CD8-positive, alpha-beta memory T cell (primary cell): ENCODE measurements at regions of chr11 and their contacts with region 1.

Region 1: GRCh38 chr11:72144807-72145560 is 9.5 kb downstream of the FOLR3 start:
- DNase-seq: no peak
- H3K4me3 ChIP-seq: no peak overlapping the region
- H3K4me3 Mint-ChIP-seq: no peak overlapping the region
- H3K27ac ChIP-seq: no peak overlapping the region
- H3K27ac Mint-ChIP-seq: peak overlapping the region in 1 of 8 donors; percentile 36
- H3K4me1 ChIP-seq: no peaks in the 10 kb centered on the region
- H3K4me1 Mint-ChIP-seq: peaks cover 0 to 11% (median 2%) of the 10 kb centered on the region in 3 donors
- H3K27me3 ChIP-seq: no peaks in the 10 kb centered on the region
- H3K27me3 Mint-ChIP-seq: peaks cover under 1 to 6% of the 10 kb centered on the region in 2 donors

Region 2: DNA sequence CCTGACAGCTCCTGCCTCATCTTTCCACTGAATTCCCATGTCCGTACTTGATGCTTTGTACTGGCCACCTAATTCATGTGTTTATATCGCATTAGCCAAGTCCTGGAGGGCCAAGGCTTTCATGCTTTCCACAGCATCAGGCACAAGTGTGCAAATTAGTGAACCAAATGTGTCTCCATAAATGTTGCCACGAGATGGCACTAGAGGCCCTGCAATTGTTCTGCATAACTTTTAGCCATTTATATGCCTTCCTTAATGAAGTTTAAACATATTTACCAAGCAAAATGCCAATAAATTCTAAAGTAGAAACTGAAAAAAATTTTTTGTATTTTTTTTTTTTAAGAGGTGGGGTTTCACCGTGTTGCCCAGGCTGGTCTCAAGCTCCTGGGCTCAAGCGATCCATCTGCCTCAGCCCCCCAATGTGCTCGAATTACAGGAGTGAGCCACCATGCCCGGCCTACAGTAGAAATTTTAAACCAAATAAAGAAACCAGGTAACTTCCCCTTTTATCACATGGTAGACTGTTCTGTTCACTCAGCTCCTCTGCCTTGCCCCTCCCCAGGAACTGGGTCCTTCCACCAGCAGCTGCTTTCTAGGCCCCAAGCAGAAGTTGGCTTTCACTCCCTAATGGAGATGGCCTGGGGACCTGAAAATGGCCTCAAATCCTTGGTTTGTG is 167.1 kb before region 1 on chr11:
- CTCF ChIA-PET with region 1: interaction called, 30 read pairs
- POLR2A ChIA-PET with region 1: no interaction called
- DNase-seq: peak; percentile 14 to 57 (median 24)
- H3K4me3 ChIP-seq: no peak overlapping the region
- H3K4me3 Mint-ChIP-seq: no peak overlapping the region
- H3K27ac ChIP-seq: no peak overlapping the region
- H3K27ac Mint-ChIP-seq: no peak overlapping the region
- H3K4me1 ChIP-seq: no peaks in the 10 kb centered on the region
- H3K4me1 Mint-ChIP-seq: peaks cover 0 to 2% (median 0%) of the 10 kb centered on the region in 3 donors
- H3K27me3 ChIP-seq: no peaks in the 10 kb centered on the region
- H3K27me3 Mint-ChIP-seq: no peaks in the 10 kb centered on the region

Region 3: GRCh38 chr11:72015511-72016171 is 129.3 kb before region 1 on chr11:
- CTCF ChIA-PET with region 1: interaction called, 19 read pairs
- POLR2A ChIA-PET with region 1: no interaction called
- DNase-seq: no peak
- H3K4me3 ChIP-seq: no peak overlapping the region
- H3K4me3 Mint-ChIP-seq: no peak overlapping the region
- H3K27ac ChIP-seq: no peak overlapping the region
- H3K27ac Mint-ChIP-seq: peak overlapping the region in 3 of 8 donors; percentile 33 to 94 (median 54)
- H3K4me1 ChIP-seq: no peaks in the 10 kb centered on the region
- H3K4me1 Mint-ChIP-seq: no peaks in the 10 kb centered on the region
- H3K27me3 ChIP-seq: no peaks in the 10 kb centered on the region
- H3K27me3 Mint-ChIP-seq: no peaks in the 10 kb centered on the region

Region 4: GRCh38 chr11:72069787-72070251 is 75.2 kb before region 1 on chr11:
- CTCF ChIA-PET with region 1: no interaction called
- POLR2A ChIA-PET with region 1: no interaction called
- DNase-seq: no peak
- H3K4me3 ChIP-seq: no peak overlapping the region
- H3K4me3 Mint-ChIP-seq: no peak overlapping the region
- H3K27ac ChIP-seq: no peak overlapping the region
- H3K27ac Mint-ChIP-seq: peak overlapping the region in 3 of 8 donors; percentile 33 to 83 (median 63)
- H3K4me1 ChIP-seq: peaks cover 5% of the 10 kb centered on the region
- H3K4me1 Mint-ChIP-seq: peaks cover 15 to 24% (median 23%) of the 10 kb centered on the region in 3 donors
- H3K27me3 ChIP-seq: no peaks in the 10 kb centered on the region
- H3K27me3 Mint-ChIP-seq: no peaks in the 10 kb centered on the region

Region 5: DNA sequence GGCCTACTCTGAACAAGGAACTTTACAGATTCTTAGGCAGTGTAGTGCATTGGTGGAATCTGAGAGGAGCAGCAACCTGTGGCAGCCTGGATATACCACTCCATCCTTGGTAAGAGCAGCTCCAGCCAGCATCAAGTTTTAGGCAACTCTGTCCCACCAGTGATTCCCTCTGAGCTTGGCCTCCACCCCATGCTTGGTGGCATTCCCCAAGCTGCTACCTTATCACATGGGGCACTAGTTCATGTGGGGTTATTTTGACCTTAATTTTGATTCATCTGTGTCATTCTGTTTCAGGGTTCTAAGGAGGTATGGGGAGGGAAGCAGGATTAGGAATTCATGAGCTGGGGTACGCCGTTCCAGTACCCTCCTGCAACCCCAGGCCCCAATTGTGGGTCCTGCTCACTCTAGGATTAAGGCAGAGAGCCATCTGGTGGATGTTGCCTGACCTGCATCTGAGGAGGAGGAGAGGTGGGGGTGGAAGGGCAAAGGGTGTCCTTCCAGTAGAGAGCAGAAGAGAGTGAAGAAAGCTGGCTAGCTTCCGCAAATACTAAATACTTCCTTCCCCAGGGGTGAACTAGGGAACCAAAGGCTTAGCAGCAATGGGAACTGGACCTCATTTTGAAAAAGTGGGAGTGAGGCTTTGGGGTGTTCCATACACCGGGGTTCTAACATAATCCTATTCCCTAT is 53.8 kb before region 1 on chr11:
- CTCF ChIA-PET with region 1: interaction called, 12 read pairs
- POLR2A ChIA-PET with region 1: no interaction called
- DNase-seq: peak; percentile 39 to 77 (median 48)
- H3K4me3 ChIP-seq: no peak overlapping the region
- H3K4me3 Mint-ChIP-seq: peak overlapping the region in 1 of 7 donors; percentile 75
- H3K27ac ChIP-seq: no peak overlapping the region
- H3K27ac Mint-ChIP-seq: peak overlapping the region; percentile 37 to 84 (median 62)
- H3K4me1 ChIP-seq: no peaks in the 10 kb centered on the region
- H3K4me1 Mint-ChIP-seq: peaks cover 3 to 12% (median 3%) of the 10 kb centered on the region in 3 donors
- H3K27me3 ChIP-seq: no peaks in the 10 kb centered on the region
- H3K27me3 Mint-ChIP-seq: no peaks in the 10 kb centered on the region

Region 6: GRCh38 chr11:72157126-72157525 is 12.1 kb after region 1 on chr11:
- CTCF ChIA-PET with region 1: interaction called, 40 read pairs
- POLR2A ChIA-PET with region 1: interaction called, 3 read pairs
- DNase-seq: no peak
- H3K4me3 ChIP-seq: no peak overlapping the region
- H3K4me3 Mint-ChIP-seq: no peak overlapping the region
- H3K27ac ChIP-seq: no peak overlapping the region
- H3K27ac Mint-ChIP-seq: no peak overlapping the region
- H3K4me1 ChIP-seq: no peaks in the 10 kb centered on the region
- H3K4me1 Mint-ChIP-seq: no peaks in the 10 kb centered on the region
- H3K27me3 ChIP-seq: no peaks in the 10 kb centered on the region
- H3K27me3 Mint-ChIP-seq: peaks cover 8 to 24% of the 10 kb centered on the region in 2 donors